Activated T-helper 1 cell treated with anti-CD3 and anti-CD28 coated beads, Interleukin-12 subunit alpha, Interleukin-12 subunit beta, Interleukin-2, Interleukin-4 antibody, amounts not matched to agents 30 ng/mL and 10 ng/mL and 1 ng/mL, durations not matched to agents 14 hours and 24 hours and 36 hours (primary cell): ENCODE measurements at regions of chr18 and their contacts with region 1.

Region 1: GRCh38 chr18:77101410-77102258 is 30.9 kb downstream of the MBP start:
- DNase-seq: peak; percentile 31
- H3K4me3 Mint-ChIP-seq: peak overlapping the region; percentile 83
- H3K27ac Mint-ChIP-seq: peak overlapping the region; percentile 95
- H3K4me1 Mint-ChIP-seq: peaks cover 96% of the 10 kb centered on the region
- H3K27me3 Mint-ChIP-seq: no peaks in the 10 kb centered on the region

Region 2: GRCh38 chr18:76822510-76823160 is 279.0 kb before region 1 on chr18 and contains the start of gene ZNF236:
- intact Hi-C with region 1: loop called (anchors 10 kb)
- DNase-seq: peak; percentile 59
- H3K4me3 Mint-ChIP-seq: peak within 1 kb of the TSS; percentile 93
- H3K27ac Mint-ChIP-seq: peak within 1 kb of the TSS; percentile 96
- H3K4me1 Mint-ChIP-seq: peaks cover 41% of the 10 kb centered on the region
- H3K27me3 Mint-ChIP-seq: no peaks in the 10 kb centered on the region
- total RNA-seq, gene ZNF236: 18.0 and 21.5 TPM in 2 replicates

Region 3: DNA sequence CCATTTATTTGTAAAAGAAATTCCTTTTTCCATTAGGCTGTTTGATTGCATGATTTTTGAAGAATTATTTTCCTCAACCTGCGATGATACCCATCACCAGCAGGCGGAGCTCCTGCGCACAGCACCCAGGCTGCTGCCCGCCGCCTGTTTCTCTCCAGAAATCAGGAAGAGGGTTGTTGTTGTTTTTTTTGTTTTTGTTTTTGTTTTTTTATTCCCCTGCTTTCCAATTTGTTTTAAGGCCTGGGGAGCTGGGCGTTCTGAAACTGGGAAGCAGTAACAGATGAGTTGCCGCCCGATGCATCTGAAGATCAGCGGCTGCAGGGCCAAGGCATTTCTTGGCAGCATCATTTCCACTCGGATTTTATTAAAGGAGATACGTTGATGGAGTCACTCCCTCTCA is 101.1 kb before region 1 on chr18:
- intact Hi-C with region 1: loop called (anchors 2 kb)
- DNase-seq: peak; percentile 14
- H3K4me3 Mint-ChIP-seq: no peak overlapping the region
- H3K27ac Mint-ChIP-seq: no peak overlapping the region
- H3K4me1 Mint-ChIP-seq: peaks cover 26% of the 10 kb centered on the region
- H3K27me3 Mint-ChIP-seq: peaks cover 3% of the 10 kb centered on the region

Region 4: DNA sequence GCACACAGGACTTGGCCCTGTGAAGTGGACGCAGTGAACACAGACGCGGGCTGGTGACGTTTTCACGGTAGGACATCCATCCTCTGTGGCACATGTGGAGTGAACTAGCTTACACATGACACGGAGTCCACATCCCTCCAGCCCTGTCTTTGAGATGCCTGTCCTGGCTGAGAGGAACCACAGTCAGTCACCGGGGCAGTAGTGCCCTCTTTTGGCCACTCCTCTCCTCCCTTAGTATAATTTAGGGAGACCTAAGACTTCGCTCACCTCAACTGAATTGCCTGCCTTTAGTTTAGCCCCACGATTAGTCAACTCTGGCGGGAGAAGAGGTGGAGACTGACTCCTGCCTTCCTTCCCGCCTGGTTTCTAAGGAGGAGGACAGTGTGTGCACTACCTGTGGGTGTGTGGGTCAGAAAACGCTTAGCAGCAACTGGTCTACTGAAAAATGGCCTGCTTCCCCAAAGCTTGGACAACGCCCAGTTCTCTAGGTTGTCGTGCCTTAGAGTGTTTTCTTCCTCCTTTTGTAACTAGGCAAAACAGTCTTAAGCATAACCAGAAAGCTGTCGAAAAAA is 39.6 kb before region 1 on chr18:
- intact Hi-C with region 1: loop called (anchors 1 kb)
- DNase-seq: peak; percentile 37
- H3K4me3 Mint-ChIP-seq: peak overlapping the region; percentile 76
- H3K27ac Mint-ChIP-seq: peak overlapping the region; percentile 97
- H3K4me1 Mint-ChIP-seq: peaks cover 85% of the 10 kb centered on the region
- H3K27me3 Mint-ChIP-seq: no peaks in the 10 kb centered on the region

Region 5: GRCh38 chr18:77124452-77124922 is 22.9 kb after region 1 on chr18:
- intact Hi-C with region 1: loop called (anchors 1 kb)
- DNase-seq: peak; percentile 36
- H3K4me3 Mint-ChIP-seq: peak overlapping the region; percentile 79
- H3K27ac Mint-ChIP-seq: peak overlapping the region; percentile 94
- H3K4me1 Mint-ChIP-seq: peaks cover 81% of the 10 kb centered on the region
- H3K27me3 Mint-ChIP-seq: no peaks in the 10 kb centered on the region

Region 6: DNA sequence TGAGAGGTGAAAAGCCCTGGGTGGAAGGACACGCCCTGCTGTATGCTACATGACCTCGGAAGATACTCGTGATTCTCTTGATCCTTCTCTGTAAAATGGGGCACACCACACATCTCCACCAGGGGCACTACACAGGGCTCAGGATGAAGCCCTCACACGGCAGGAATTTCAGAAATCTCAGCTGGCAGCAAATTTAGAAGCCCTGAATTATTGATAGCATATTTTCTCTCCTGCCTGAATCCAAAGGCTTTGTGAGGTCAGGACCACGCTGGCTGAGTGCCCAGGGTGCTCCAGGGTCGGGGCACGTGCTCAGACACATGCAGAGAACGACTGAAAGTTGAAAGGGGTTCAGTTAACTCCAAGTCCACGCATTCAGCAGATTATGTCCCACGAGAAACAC is 105.9 kb after region 1 on chr18:
- intact Hi-C with region 1: loop called (anchors 1 kb)
- DNase-seq: no peak
- H3K4me3 Mint-ChIP-seq: peak overlapping the region; percentile 28
- H3K27ac Mint-ChIP-seq: no peak overlapping the region
- H3K4me1 Mint-ChIP-seq: peaks cover 45% of the 10 kb centered on the region
- H3K27me3 Mint-ChIP-seq: no peaks in the 10 kb centered on the region